Activated CD4-positive, alpha-beta memory T cell treated with anti-CD3 and anti-CD28 coated beads, Interleukin-2, amount 10 ng/mL, durations not matched to agents 7 days and 5 days (primary cell): ENCODE measurements at regions of chr15 and their contacts with region 1.

Region 1: DNA sequence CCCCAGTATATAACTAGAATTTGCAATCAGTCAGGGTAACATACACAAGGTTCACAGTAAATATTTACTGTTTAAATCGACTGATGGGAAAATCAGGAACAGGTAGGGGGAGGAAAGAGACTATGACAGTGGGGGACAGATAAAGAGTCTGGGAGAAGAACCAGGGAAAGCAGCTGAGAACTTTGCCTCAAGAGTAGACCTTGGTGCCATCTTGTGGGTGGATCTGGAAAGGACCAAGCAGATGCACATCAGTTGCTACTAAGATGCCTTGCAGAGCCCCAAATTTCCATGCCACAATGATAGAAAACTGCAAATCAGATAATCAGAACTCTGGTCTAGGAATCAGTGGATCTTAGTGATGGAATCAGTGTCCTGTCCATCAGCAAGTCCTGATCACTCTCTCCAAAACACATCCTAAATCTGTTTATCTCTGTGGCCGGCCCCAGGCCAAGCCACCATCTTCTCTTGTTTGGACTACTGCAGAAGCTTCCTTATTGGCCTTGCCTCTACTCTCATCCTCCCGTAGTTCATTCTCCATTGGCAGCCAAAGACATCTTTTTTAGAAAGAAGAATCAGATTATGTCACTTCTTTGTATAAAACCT is 62.7 kb downstream of the PDE8A start:
- DNase-seq: peak; percentile 53
- H3K4me3 Mint-ChIP-seq: no peak overlapping the region
- H3K27ac Mint-ChIP-seq: no peak overlapping the region
- H3K4me1 Mint-ChIP-seq: peaks cover 24% of the 10 kb centered on the region
- H3K27me3 Mint-ChIP-seq: no peaks in the 10 kb centered on the region

Region 2: GRCh38 chr15:84926501-84927230 is 117.7 kb before region 1 on chr15:
- CTCF ChIA-PET with region 1: interaction called, 14 read pairs
- POLR2A ChIA-PET with region 1: no interaction called
- DNase-seq: no peak
- H3K4me3 Mint-ChIP-seq: no peak overlapping the region
- H3K27ac Mint-ChIP-seq: no peak overlapping the region
- H3K4me1 Mint-ChIP-seq: peaks cover 11% of the 10 kb centered on the region
- H3K27me3 Mint-ChIP-seq: no peaks in the 10 kb centered on the region